Aorta (tissue), 5 donors: ENCODE measurements at regions of chr7 and their contacts with region 1.

Region 1: GRCh38 chr7:13262929-13263530 is 575.6 kb downstream of the ARL4A start:
- DNase-seq: no peak
- ATAC-seq: no peak
- H3K4me3 ChIP-seq: no peak overlapping the region
- H3K27ac ChIP-seq: no peak overlapping the region
- H3K4me1 ChIP-seq: no peaks in the 10 kb centered on the region
- H3K27me3 ChIP-seq: no peaks in the 10 kb centered on the region

Region 2: DNA sequence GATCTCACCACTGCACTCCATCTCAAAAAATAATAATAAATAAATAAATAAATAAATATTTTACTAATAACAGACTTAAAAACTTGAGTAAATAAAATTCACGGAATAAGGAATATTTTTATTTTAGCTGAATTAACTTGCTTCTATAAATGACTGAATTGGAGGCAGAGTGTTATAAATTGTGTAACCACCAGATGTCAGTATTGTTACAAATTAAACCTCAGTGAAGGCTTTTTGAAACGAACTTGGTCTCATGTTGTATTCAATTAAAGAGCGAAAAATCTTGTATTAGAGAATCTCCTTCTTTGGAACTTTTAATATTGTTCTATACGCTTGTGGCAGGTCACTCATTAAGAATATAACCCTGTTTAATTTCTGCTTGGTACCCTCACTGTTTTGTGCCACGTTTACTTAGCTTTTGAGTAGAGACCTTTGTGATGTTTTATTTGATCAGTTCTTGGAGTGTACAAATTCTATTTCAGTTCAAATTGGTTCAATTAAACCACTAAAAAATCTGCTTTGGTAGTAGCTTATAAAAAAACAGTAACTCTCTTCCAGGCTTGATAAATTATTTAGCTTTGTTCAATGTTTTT is 738.1 kb before region 1 on chr7:
- intact Hi-C with region 1: loop called (anchors 5 to 10 kb)
- DNase-seq: no peak
- ATAC-seq: no peak
- H3K4me3 ChIP-seq: no peak overlapping the region
- H3K27ac ChIP-seq: no peak overlapping the region
- H3K4me1 ChIP-seq: no peaks in the 10 kb centered on the region
- H3K27me3 ChIP-seq: no peaks in the 10 kb centered on the region

Region 3: GRCh38 chr7:12638851-12639467 is 624.1 kb before region 1 on chr7:
- intact Hi-C with region 1: loop called (anchors 2 kb)
- DNase-seq: no peak
- ATAC-seq: peak; percentile 58
- H3K4me3 ChIP-seq: no peak overlapping the region
- H3K27ac ChIP-seq: no peak overlapping the region
- H3K4me1 ChIP-seq: no peaks in the 10 kb centered on the region
- H3K27me3 ChIP-seq: peaks cover 0 to 2% of the 10 kb centered on the region in 2 donors

Region 4: GRCh38 chr7:12686894-12687717 is 575.9 kb before region 1 on chr7 and contains the start of gene ARL4A:
- intact Hi-C with region 1: loop called (anchors 5 kb)
- DNase-seq: peak; percentile 99
- ATAC-seq: peak; percentile 97
- H3K4me3 ChIP-seq: peak within 1 kb of the TSS; percentile 73 to 93
- H3K27ac ChIP-seq: peak within 1 kb of the TSS in 1 of 2 donors; percentile 3
- H3K4me1 ChIP-seq: no peaks in the 10 kb centered on the region
- H3K27me3 ChIP-seq: no peaks in the 10 kb centered on the region
- total RNA-seq, gene ARL4A: 21.9 to 34.3 TPM